Panc1 (cell line): ENCODE measurements at regions of chr5 and their contacts with region 1.

Region 1: GRCh38 chr5:19278275-19278674 is 709.7 kb downstream of the CDH18 start:
- DNase-seq: no peak
- ATAC-seq: no peak
- H3K4me3 ChIP-seq: no peak overlapping the region
- H3K27ac ChIP-seq: no peak overlapping the region
- H3K4me1 ChIP-seq: no peaks in the 10 kb centered on the region
- H3K27me3 ChIP-seq: no peaks in the 10 kb centered on the region
- CTCF ChIP-seq: no peak

Region 2: DNA sequence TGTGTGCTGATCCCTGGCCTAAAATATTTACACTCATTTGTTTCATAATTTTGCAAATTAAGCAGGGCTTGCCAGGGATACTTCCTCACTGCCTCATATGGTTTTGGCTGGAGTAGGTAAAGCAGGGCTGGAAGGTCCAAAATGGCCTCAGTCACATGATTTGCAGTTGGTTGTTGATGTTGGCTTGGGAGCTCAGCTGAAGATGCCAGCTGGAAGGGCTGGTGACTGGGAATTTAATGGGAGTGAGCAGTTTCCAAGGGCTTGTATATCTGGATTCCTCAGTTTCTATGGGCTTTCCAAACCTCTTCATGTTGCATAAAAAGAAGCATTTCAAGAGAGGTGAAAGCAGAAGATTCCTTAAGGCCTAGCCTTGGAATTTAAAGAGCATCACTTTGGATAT is 19.6 kb before region 1 on chr5:
- CTCF ChIA-PET with region 1: no interaction called
- POLR2A ChIA-PET with region 1: no interaction called
- in situ Hi-C with region 1: no loop called
- intact Hi-C with region 1: no loop called
- DNase-seq: no peak
- ATAC-seq: no peak
- H3K4me3 ChIP-seq: no peak overlapping the region
- H3K27ac ChIP-seq: no peak overlapping the region
- H3K4me1 ChIP-seq: no peaks in the 10 kb centered on the region
- H3K27me3 ChIP-seq: no peaks in the 10 kb centered on the region
- CTCF ChIP-seq: no peak

Region 3: GRCh38 chr5:19342942-19343341 is 64.7 kb after region 1 on chr5:
- CTCF ChIA-PET with region 1: interaction called, 12 read pairs
- POLR2A ChIA-PET with region 1: no interaction called
- in situ Hi-C with region 1: no loop called
- intact Hi-C with region 1: no loop called
- DNase-seq: no peak
- ATAC-seq: no peak
- H3K4me3 ChIP-seq: no peak overlapping the region
- H3K27ac ChIP-seq: no peak overlapping the region
- H3K4me1 ChIP-seq: no peaks in the 10 kb centered on the region
- H3K27me3 ChIP-seq: no peaks in the 10 kb centered on the region
- CTCF ChIP-seq: no peak